ENCODE measurements at regions of chr14 and their contacts with region 1.

Region 1: GRCh38 chr14:50714450-50715073 is 46.5 kb upstream of the SAV1 start:
- DNase-seq: no peak
- H3K4me3 ChIP-seq: no peak overlapping the region
- H3K4me3 Mint-ChIP-seq: no peak overlapping the region
- H3K27ac ChIP-seq: no peak overlapping the region
- H3K27ac Mint-ChIP-seq: no peak overlapping the region
- H3K4me1 ChIP-seq: no peaks in the 10 kb centered on the region
- H3K4me1 Mint-ChIP-seq: no peaks in the 10 kb centered on the region
- H3K27me3 ChIP-seq: no peaks in the 10 kb centered on the region
- H3K27me3 Mint-ChIP-seq: peaks cover 0 to 4% of the 10 kb centered on the region in 2 donors

Region 2: DNA sequence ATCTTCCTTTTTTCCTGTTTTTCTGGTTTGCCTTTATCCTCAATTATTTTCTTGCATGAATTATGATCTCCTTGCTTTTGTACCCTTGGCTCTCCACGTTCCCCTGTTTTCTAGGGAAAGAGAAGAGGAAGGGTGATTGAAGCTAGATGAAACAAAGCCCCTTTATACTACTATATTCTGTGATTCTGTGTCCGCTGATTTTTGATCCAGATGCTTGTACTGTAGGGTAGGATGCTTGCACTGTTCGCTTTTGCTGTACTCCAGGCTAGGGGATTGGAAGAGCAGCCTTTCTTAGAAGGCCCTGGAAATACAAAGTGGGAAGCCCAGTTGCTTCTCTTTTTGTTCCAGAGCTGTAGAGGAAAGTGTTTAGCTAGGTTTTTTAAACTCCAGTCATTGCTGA is 981.7 kb before region 1 on chr14:
- CTCF ChIA-PET with region 1: no interaction called
- POLR2A ChIA-PET with region 1: interaction called, 15 read pairs
- DNase-seq: no peak
- H3K4me3 ChIP-seq: no peak overlapping the region
- H3K4me3 Mint-ChIP-seq: no peak overlapping the region
- H3K27ac ChIP-seq: no peak overlapping the region
- H3K27ac Mint-ChIP-seq: peak overlapping the region in 1 of 8 donors; percentile 38
- H3K4me1 ChIP-seq: no peaks in the 10 kb centered on the region
- H3K4me1 Mint-ChIP-seq: no peaks in the 10 kb centered on the region
- H3K27me3 ChIP-seq: no peaks in the 10 kb centered on the region
- H3K27me3 Mint-ChIP-seq: no peaks in the 10 kb centered on the region

Region 3: DNA sequence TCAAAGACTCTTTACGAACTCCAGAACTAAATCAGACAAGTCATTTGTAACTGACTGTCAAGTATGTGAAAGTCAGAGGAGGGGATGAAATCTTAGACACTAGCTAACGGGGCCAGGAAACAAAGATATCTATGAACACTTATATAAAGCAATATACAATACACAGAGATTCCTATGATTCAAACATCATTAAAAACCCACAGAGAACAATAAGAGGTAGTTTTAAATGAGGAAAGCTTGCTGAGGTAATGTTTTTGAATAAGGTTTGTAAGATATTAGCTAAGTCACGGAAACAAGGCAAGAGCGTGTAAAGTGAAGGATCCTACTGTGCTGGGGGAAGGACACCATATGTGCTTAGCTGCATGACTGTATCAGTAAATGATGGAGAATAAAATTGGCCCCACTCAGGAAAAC is 83.1 kb before region 1 on chr14:
- CTCF ChIA-PET with region 1: no interaction called
- POLR2A ChIA-PET with region 1: no interaction called
- DNase-seq: no peak
- H3K4me3 ChIP-seq: no peak overlapping the region
- H3K4me3 Mint-ChIP-seq: no peak overlapping the region
- H3K27ac ChIP-seq: no peak overlapping the region
- H3K27ac Mint-ChIP-seq: no peak overlapping the region
- H3K4me1 ChIP-seq: no peaks in the 10 kb centered on the region
- H3K4me1 Mint-ChIP-seq: no peaks in the 10 kb centered on the region
- H3K27me3 ChIP-seq: no peaks in the 10 kb centered on the region
- H3K27me3 Mint-ChIP-seq: no peaks in the 10 kb centered on the region